Activated CD4-positive, alpha-beta T cell treated with anti-CD3 and anti-CD28 coated beads, Interleukin-2, amount 10 ng/mL, durations not matched to agents 24 days and 14 days (primary cell): ENCODE measurements at regions of chr6 and their contacts with region 1.

Region 1: DNA sequence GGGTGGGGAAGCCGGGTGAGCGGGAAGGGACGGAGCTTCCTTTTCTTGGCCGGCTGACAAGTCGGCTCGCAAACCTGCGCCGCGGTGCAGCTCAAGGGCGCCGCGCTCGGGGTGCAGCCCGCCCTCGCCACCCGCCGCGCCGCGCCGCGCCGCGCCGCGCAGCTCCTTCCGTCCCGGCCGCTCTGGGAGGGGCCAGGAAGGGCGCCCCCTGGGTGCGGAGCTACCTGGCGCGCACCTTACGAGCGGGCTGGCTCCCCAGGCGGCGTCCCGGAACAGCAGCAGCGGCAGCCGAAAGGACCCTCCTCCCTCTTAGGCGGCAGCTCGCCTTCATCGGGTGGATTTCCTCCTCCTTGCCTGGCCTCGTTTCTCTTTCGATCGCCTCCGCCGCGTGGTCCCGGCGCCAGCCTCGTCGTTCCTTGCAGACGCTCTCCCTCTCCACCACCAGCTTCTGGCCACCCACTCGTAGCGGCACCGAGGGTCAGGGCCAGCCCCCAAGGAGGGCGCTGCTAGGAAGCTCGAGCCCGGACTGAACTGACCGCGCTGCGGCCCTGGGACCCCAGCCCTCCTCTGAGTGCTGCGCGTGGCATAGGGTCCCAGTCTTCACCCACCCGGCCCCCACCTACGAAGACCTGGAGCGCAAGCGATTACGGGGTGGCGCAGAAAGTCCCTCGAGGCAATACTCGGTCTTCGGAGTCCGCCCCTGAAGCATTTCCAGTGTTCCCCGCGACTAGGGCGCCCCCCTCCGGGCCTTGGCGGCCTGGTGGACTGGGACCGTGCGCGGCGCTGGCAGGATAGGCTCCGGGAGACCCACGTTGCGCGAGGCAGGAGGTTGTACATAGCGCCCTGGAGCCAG is at the start of gene MAP3K5:
- DNase-seq: peak; percentile 98
- H3K4me3 Mint-ChIP-seq: peak within 1 kb of the TSS; percentile 84
- H3K27ac Mint-ChIP-seq: peak within 1 kb of the TSS; percentile 96
- H3K4me1 Mint-ChIP-seq: peaks cover 26% of the 10 kb centered on the region
- H3K27me3 Mint-ChIP-seq: peaks cover 3% of the 10 kb centered on the region
- total RNA-seq, gene MAP3K5: 8.7 and 8.8 TPM in 2 replicates

Region 2: DNA sequence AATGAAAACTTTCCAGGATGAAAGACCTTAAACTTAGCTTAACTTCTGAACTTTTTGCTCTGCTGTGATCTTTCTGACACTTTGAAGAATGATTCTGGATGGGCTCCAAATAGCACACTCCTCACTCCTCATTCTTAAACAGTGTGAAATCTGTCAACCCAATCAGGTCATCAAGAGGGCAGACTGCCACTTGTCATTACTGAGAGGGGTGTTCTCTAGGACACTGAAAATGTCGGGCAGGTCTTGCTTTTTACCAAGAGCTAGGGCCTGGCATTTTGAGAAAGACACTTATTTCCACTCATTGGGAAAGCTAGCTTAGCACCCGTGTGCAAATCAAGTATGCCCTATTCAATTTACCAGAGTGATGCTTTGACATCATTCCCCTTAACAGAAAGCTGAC is 664.8 kb before region 1 on chr6:
- intact Hi-C with region 1: no loop called
- DNase-seq: no peak
- H3K4me3 Mint-ChIP-seq: no peak overlapping the region
- H3K27ac Mint-ChIP-seq: no peak overlapping the region
- H3K4me1 Mint-ChIP-seq: no peaks in the 10 kb centered on the region
- H3K27me3 Mint-ChIP-seq: peaks cover 4% of the 10 kb centered on the region

Region 3: GRCh38 chr6:136226027-136226673 is 566.5 kb before region 1 on chr6:
- intact Hi-C with region 1: no loop called
- DNase-seq: peak; percentile 89
- H3K4me3 Mint-ChIP-seq: peak overlapping the region; percentile 25
- H3K27ac Mint-ChIP-seq: peak overlapping the region; percentile 44
- H3K4me1 Mint-ChIP-seq: peaks cover 22% of the 10 kb centered on the region
- H3K27me3 Mint-ChIP-seq: no peaks in the 10 kb centered on the region

Region 4: GRCh38 chr6:136582711-136583471 is 209.7 kb before region 1 on chr6:
- intact Hi-C with region 1: loop called (anchors 1 kb)
- DNase-seq: no peak
- H3K4me3 Mint-ChIP-seq: no peak overlapping the region
- H3K27ac Mint-ChIP-seq: no peak overlapping the region
- H3K4me1 Mint-ChIP-seq: peaks cover 3% of the 10 kb centered on the region
- H3K27me3 Mint-ChIP-seq: no peaks in the 10 kb centered on the region

Region 5: DNA sequence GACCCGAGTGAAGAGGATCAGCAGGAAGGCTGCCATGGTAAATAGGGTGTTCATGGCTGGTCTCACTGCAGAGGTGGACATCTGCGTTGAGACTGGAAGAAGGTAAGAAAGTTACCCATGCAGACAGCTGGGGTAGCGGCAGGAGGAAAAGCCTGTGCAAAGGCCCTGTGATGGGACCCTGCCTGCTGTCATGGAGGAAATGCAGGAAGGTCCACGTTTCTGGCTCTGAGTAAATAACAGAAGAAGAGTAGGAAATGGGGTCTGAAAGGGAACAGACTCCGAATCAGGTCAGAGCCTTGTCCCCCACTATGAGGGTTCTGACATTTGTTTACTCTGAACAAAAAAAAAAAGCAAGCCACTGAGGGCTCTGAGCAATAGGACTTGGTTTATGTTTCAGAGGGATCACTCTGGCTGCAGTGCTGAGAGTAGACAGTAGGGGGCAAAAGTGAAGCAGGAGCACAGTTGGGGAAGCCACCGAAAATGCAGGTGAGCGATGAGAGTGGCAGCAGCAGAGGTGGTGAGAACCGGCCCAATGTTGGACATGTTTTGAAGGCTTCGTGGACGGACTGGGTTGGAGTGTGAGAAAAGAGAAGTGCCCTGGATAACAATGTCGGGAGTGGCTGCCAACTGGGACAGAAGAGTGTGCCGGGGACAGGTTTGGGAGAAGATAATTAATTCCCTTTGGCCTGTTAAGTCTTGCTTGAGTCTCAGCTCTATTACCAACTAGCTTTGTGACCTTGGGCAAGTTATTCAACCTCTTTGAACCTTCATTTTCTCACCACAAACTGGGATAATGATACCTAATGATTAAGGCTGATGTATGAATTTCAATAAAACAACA is 184.5 kb before region 1 on chr6:
- intact Hi-C with region 1: loop called (anchors 1 kb)
- DNase-seq: peak; percentile 94
- H3K4me3 Mint-ChIP-seq: no peak overlapping the region
- H3K27ac Mint-ChIP-seq: no peak overlapping the region
- H3K4me1 Mint-ChIP-seq: peaks cover 15% of the 10 kb centered on the region
- H3K27me3 Mint-ChIP-seq: no peaks in the 10 kb centered on the region

Region 6: GRCh38 chr6:136696238-136696637 is 96.4 kb before region 1 on chr6:
- intact Hi-C with region 1: loop called (anchors 1 kb)
- DNase-seq: no peak
- H3K4me3 Mint-ChIP-seq: no peak overlapping the region
- H3K27ac Mint-ChIP-seq: no peak overlapping the region
- H3K4me1 Mint-ChIP-seq: peaks cover 19% of the 10 kb centered on the region
- H3K27me3 Mint-ChIP-seq: no peaks in the 10 kb centered on the region

Region 7: GRCh38 chr6:136751522-136751956 is 41.1 kb before region 1 on chr6:
- intact Hi-C with region 1: loop called (anchors 1 kb)
- DNase-seq: peak; percentile 86
- H3K4me3 Mint-ChIP-seq: peak overlapping the region; percentile 74
- H3K27ac Mint-ChIP-seq: peak overlapping the region; percentile 90
- H3K4me1 Mint-ChIP-seq: peaks cover 75% of the 10 kb centered on the region
- H3K27me3 Mint-ChIP-seq: no peaks in the 10 kb centered on the region

Region 8: GRCh38 chr6:136822376-136823127 is 29.9 kb after region 1 on chr6 and contains the start of gene PEX7:
- intact Hi-C with region 1: loop called (anchors 1 kb)
- DNase-seq: peak; percentile 96
- H3K4me3 Mint-ChIP-seq: peak within 1 kb of the TSS; percentile 95
- H3K27ac Mint-ChIP-seq: peak within 1 kb of the TSS; percentile 96
- H3K4me1 Mint-ChIP-seq: peaks cover 18% of the 10 kb centered on the region
- H3K27me3 Mint-ChIP-seq: peaks cover 6% of the 10 kb centered on the region
- total RNA-seq, gene PEX7: 4.3 and 5.4 TPM in 2 replicates

Region 9: GRCh38 chr6:136846046-136846445 is 53.4 kb after region 1 on chr6:
- intact Hi-C with region 1: no loop called
- DNase-seq: peak; percentile 79
- H3K4me3 Mint-ChIP-seq: no peak overlapping the region
- H3K27ac Mint-ChIP-seq: no peak overlapping the region
- H3K4me1 Mint-ChIP-seq: no peaks in the 10 kb centered on the region
- H3K27me3 Mint-ChIP-seq: no peaks in the 10 kb centered on the region